Caco-2 (cell line): ENCODE measurements at regions of chr4 and their contacts with region 1.

Region 1: GRCh38 chr4:39446751-39447573 is 11.8 kb downstream of the RPL9 start:
- DNase-seq: no peak
- H3K4me3 ChIP-seq: no peak overlapping the region
- H3K4me3 Mint-ChIP-seq: no peak overlapping the region
- H3K27ac Mint-ChIP-seq: no peak overlapping the region
- H3K4me1 ChIP-seq: peaks cover 9% of the 10 kb centered on the region
- H3K4me1 Mint-ChIP-seq: peaks cover 9% of the 10 kb centered on the region
- H3K27me3 ChIP-seq: no peaks in the 10 kb centered on the region
- H3K27me3 Mint-ChIP-seq: no peaks in the 10 kb centered on the region
- CTCF ChIP-seq: no peak

Region 2: GRCh38 chr4:38889143-38889542 is 557.8 kb before region 1 on chr4:
- CTCF ChIA-PET with region 1: no interaction called
- POLR2A ChIA-PET with region 1: no interaction called
- intact Hi-C with region 1: no loop called
- DNase-seq: no peak
- H3K4me3 ChIP-seq: no peak overlapping the region
- H3K4me3 Mint-ChIP-seq: no peak overlapping the region
- H3K27ac Mint-ChIP-seq: no peak overlapping the region
- H3K4me1 ChIP-seq: peaks cover 23% of the 10 kb centered on the region
- H3K4me1 Mint-ChIP-seq: peaks cover 14% of the 10 kb centered on the region
- H3K27me3 ChIP-seq: no peaks in the 10 kb centered on the region
- H3K27me3 Mint-ChIP-seq: no peaks in the 10 kb centered on the region
- CTCF ChIP-seq: no peak

Region 3: GRCh38 chr4:39458505-39459300 is 11.7 kb after region 1 on chr4 and contains the starts of genes LIAS and RPL9:
- CTCF ChIA-PET with region 1: no interaction called
- POLR2A ChIA-PET with region 1: interaction called, 11 read pairs
- intact Hi-C with region 1: no loop called
- DNase-seq: peak; percentile 95 to 98
- H3K4me3 ChIP-seq: peak within 1 kb of the TSS; percentile 76
- H3K4me3 Mint-ChIP-seq: peak within 1 kb of the TSS; percentile 88
- H3K27ac Mint-ChIP-seq: peak within 1 kb of the TSS; percentile 96
- H3K4me1 ChIP-seq: peaks cover 11% of the 10 kb centered on the region
- H3K4me1 Mint-ChIP-seq: peaks cover 6% of the 10 kb centered on the region
- H3K27me3 ChIP-seq: no peaks in the 10 kb centered on the region
- H3K27me3 Mint-ChIP-seq: no peaks in the 10 kb centered on the region
- CTCF ChIP-seq: no peak
- total RNA-seq, gene LIAS: 19.5 and 21.1 TPM in 2 replicates
- total RNA-seq, gene RPL9: 976 and 978 TPM in 2 replicates

Region 4: DNA sequence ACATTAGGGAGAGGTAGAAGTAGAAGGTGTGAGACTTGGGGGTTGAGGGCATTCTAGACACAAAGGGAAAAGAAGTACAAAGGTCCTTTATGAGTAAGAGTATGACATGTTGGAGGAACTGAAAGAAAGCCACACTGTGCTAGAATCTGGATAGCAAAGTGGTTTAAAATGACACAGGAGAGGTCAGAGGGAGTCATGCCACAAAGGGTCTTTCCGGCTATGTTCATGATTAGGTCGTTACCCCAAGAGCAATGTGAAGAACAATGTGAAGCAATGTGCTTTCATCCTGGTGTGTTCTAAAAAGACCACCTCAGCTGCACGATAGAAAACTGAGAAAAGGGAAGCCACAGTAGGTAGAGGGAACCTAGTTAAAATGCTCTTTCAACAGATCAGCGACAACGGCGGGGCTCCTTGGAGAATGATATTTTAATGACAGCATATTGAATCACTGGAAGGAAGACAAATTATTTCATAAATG is 162.5 kb after region 1 on chr4:
- CTCF ChIA-PET with region 1: no interaction called
- POLR2A ChIA-PET with region 1: no interaction called
- intact Hi-C with region 1: no loop called
- DNase-seq: no peak
- H3K4me3 ChIP-seq: no peak overlapping the region
- H3K4me3 Mint-ChIP-seq: peak overlapping the region; percentile 14
- H3K27ac Mint-ChIP-seq: peak overlapping the region; percentile 57
- H3K4me1 ChIP-seq: peaks cover 33% of the 10 kb centered on the region
- H3K4me1 Mint-ChIP-seq: peaks cover 12% of the 10 kb centered on the region
- H3K27me3 ChIP-seq: no peaks in the 10 kb centered on the region
- H3K27me3 Mint-ChIP-seq: no peaks in the 10 kb centered on the region
- CTCF ChIP-seq: no peak